OCI-LY7 (cell line): ENCODE measurements at regions of chr15 and their contacts with region 1.

Region 1: GRCh38 chr15:44296625-44297524 is 8.4 kb downstream of the GOLM2 start:
- DNase-seq: no peak
- H3K4me3 ChIP-seq: no peak overlapping the region
- H3K27ac ChIP-seq: no peak overlapping the region
- H3K4me1 ChIP-seq: peaks cover 29% of the 10 kb centered on the region
- CTCF ChIP-seq: no peak

Region 2: GRCh38 chr15:44144184-44144583 is 152.7 kb before region 1 on chr15:
- CTCF ChIA-PET with region 1: no interaction called
- POLR2A ChIA-PET with region 1: no interaction called
- intact Hi-C with region 1: no loop called
- DNase-seq: no peak
- H3K4me3 ChIP-seq: no peak overlapping the region
- H3K27ac ChIP-seq: no peak overlapping the region
- H3K4me1 ChIP-seq: no peaks in the 10 kb centered on the region
- CTCF ChIP-seq: no peak

Region 3: DNA sequence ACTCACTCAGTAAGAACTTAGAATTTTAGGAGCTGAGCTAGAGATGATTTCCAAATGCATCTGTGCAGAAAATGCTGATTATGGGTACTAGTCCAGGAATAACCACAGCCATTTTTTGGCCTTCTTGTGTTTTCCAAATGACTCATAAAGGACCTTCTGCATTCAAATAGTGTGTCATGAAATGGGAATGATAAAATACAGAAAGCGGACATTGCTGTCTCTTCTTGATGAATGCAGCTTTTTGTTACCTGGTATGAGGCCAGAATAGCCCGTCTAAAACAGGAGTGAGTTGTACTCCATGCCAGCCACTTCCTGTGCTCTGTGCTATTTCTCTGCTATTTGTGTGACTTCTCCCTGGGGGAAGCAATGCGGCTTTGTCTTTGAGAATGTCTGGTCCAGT is 81.3 kb before region 1 on chr15:
- CTCF ChIA-PET with region 1: no interaction called
- POLR2A ChIA-PET with region 1: no interaction called
- intact Hi-C with region 1: no loop called
- DNase-seq: no peak
- H3K4me3 ChIP-seq: no peak overlapping the region
- H3K27ac ChIP-seq: no peak overlapping the region
- H3K4me1 ChIP-seq: no peaks in the 10 kb centered on the region
- CTCF ChIP-seq: no peak

Region 4: GRCh38 chr15:44308889-44309288 is 12.0 kb after region 1 on chr15:
- CTCF ChIA-PET with region 1: no interaction called
- POLR2A ChIA-PET with region 1: interaction called, 10 read pairs
- intact Hi-C with region 1: no loop called
- DNase-seq: no peak
- H3K4me3 ChIP-seq: peak overlapping the region; percentile 33
- H3K27ac ChIP-seq: peak overlapping the region; percentile 51
- H3K4me1 ChIP-seq: peaks cover 35% of the 10 kb centered on the region
- CTCF ChIP-seq: no peak

Region 5: DNA sequence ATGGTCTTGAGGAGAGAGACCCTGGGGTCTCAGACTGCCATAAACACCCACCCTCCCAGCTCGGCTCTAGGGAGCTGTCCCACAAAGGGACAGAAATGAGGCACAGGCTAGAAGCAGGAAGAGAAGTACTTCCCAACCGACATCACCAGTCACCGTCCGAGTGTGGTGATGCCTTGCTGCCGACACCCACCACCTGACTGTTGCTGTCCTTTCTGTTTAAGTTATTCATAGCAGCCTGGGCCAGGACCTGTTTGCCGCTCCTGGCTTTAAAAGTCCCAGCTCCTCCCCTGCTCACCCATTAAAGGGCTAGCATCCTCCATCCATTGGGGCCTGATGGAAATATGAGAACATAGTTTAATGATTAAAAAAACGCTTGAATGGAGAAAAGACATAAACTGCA is 379.8 kb after region 1 on chr15:
- CTCF ChIA-PET with region 1: no interaction called
- POLR2A ChIA-PET with region 1: no interaction called
- intact Hi-C with region 1: no loop called
- DNase-seq: no peak
- H3K4me3 ChIP-seq: no peak overlapping the region
- H3K27ac ChIP-seq: no peak overlapping the region
- H3K4me1 ChIP-seq: peaks cover 14% of the 10 kb centered on the region
- CTCF ChIP-seq: no peak